Activated T-helper 2 cell treated with anti-CD3 and anti-CD28 coated beads, Interferon-gamma antibody, Interleukin-2, Interleukin-4, amounts not matched to agents 10 μg/mL and 5 μg/mL and 100 μg/mL, durations not matched to agents 14 hours and 24 hours and 36 hours (primary cell): ENCODE measurements at regions of chr10 and their contacts with region 1.

Region 1: DNA sequence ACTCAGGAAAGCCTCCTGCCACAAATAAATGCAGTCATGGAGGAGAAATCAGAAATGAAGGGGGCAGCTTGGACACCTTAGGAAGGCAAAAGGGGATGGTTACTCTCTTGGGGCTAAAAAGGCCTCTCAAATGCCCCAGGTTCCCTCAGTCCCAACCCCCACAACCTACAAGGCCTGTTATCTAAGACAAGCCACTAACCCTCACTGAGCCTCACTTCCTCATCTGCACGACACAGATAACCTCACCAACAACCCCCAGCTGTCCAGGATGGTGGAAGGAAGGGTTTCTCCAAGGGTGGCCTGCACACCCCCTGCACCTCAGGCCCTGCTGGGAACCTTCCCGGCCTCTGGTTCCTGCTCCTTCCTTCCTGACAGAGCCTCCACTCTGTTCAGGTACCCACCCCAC is 29.2 kb downstream of the SORBS1 start:
- DNase-seq: no peak
- H3K4me3 Mint-ChIP-seq: no peak overlapping the region
- H3K27ac Mint-ChIP-seq: no peak overlapping the region
- H3K4me1 Mint-ChIP-seq: peaks cover 5% of the 10 kb centered on the region
- H3K27me3 Mint-ChIP-seq: no peaks in the 10 kb centered on the region

Region 2: GRCh38 chr10:95485445-95485844 is 46.6 kb before region 1 on chr10:
- intact Hi-C with region 1: loop called (anchors 1 kb)
- DNase-seq: no peak
- H3K4me3 Mint-ChIP-seq: no peak overlapping the region
- H3K27ac Mint-ChIP-seq: peak overlapping the region; percentile 79
- H3K4me1 Mint-ChIP-seq: peaks cover 4% of the 10 kb centered on the region
- H3K27me3 Mint-ChIP-seq: no peaks in the 10 kb centered on the region